A549 (cell line): ENCODE measurements at regions of chr2 and their contacts with region 1.

Region 1: GRCh38 chr2:33583194-33583938 is 15.7 kb downstream of the FAM98A start:
- DNase-seq: peak in 1 of 2 experiments; percentile 46
- ATAC-seq: peak in 1 of 2 experiments; percentile 62; a peak in 3 of 6 replicates
- H3K4me3 ChIP-seq: no peak overlapping the region
- H3K27ac ChIP-seq: no peak overlapping the region
- H3K4me1 ChIP-seq: no peaks in the 10 kb centered on the region
- CTCF ChIP-seq: peak; percentile 99
- EP300 ChIP-seq: no peak
- POLR2A ChIP-seq: no peak
- RAD21 ChIP-seq: peak; percentile 93 to 96

Region 2: GRCh38 chr2:33598561-33599174 is 15.3 kb after region 1 on chr2:
- CTCF ChIA-PET with region 1: interaction called, 20 read pairs
- POLR2A ChIA-PET with region 1: no interaction called
- DNase-seq: peak; percentile 23 to 40
- ATAC-seq: peak; percentile 66 to 68
- H3K4me3 ChIP-seq: peak overlapping the region; percentile 98
- H3K27ac ChIP-seq: peak overlapping the region; percentile 90
- H3K4me1 ChIP-seq: peaks cover 11% of the 10 kb centered on the region
- CTCF ChIP-seq: no peak
- EP300 ChIP-seq: no peak
- POLR2A ChIP-seq: no peak
- RAD21 ChIP-seq: no peak

Region 3: GRCh38 chr2:33835911-33836310 is 252.5 kb after region 1 on chr2:
- CTCF ChIA-PET with region 1: no interaction called
- POLR2A ChIA-PET with region 1: no interaction called
- DNase-seq: no peak
- ATAC-seq: no peak
- H3K4me3 ChIP-seq: no peak overlapping the region
- H3K27ac ChIP-seq: no peak overlapping the region
- H3K4me1 ChIP-seq: no peaks in the 10 kb centered on the region
- CTCF ChIP-seq: no peak
- EP300 ChIP-seq: no peak
- POLR2A ChIP-seq: no peak
- RAD21 ChIP-seq: no peak